IMR-90 (cell line): ENCODE measurements at regions of chr5 and their contacts with region 1.

Region 1: DNA sequence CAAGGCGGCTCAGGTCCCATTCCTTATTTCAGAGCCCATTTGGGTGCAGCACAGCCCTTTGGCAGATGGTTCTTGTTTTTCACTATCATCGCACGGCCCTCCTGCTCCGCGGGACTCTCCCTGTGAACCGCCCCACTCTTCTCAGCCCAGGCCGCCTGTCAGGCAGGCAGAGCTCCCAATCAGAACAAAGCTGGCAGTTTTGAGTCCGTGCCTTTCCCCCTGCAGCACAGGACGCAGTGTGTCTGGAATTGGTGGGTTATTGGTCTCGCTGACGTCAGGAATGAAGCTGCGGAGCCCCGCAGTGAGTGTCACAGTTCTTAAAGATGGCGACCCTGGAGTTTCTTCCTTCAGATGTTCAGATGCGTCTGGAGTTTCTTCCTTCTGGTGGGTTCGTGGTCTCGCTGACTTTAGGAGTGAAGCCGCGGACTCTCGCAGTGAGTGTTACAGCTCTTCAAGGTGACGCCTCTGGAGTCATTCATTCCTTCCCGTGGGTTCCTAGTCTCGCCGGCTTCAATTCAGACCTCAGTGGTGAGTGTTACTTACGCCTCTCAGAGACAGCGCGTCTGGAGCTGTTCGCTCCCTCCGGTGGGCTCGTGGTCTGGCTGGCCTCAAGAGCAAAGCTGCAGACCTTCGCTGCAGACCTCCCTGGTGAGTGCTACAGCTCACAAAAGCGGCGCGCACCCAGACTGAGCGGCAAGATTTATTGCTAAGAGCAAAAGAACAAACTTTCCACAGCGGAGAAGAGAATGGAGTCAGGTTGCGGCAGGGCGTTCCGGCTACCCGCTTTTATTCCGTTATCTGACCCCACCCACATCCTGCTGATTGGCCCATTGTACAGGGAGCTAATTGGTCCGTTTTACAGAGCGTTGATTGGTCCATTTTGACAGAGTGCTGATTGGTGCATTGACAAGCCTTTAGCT is 7.5 kb downstream of the ZDHHC11B start:
- DNase-seq: no peak
- ATAC-seq: 0 out of 2 replicates have a peak, but pooled peaks have one; percentile 40
- H3K4me3 ChIP-seq: no peak overlapping the region
- H3K27ac ChIP-seq: no peak overlapping the region
- H3K4me1 ChIP-seq: no peaks in the 10 kb centered on the region
- H3K27me3 ChIP-seq: peaks cover 19% of the 10 kb centered on the region; the same call in 1 of the 2 replicates
- CTCF ChIP-seq: no peak
- POLR2A ChIP-seq: no peak
- RAD21 ChIP-seq: no peak

Region 2: GRCh38 chr5:683551-684481 is 93.2 kb before region 1 on chr5:
- CTCF ChIA-PET with region 1: no interaction called
- POLR2A ChIA-PET with region 1: no interaction called
- dilution Hi-C with region 1: no loop called
- in situ Hi-C with region 1: loop called (anchors 10 kb)
- intact Hi-C with region 1: loop called (anchors 2 kb)
- DNase-seq: no peak
- ATAC-seq: no peak
- H3K4me3 ChIP-seq: no peak overlapping the region
- H3K27ac ChIP-seq: no peak overlapping the region
- H3K4me1 ChIP-seq: no peaks in the 10 kb centered on the region
- H3K27me3 ChIP-seq: peaks cover 6% of the 10 kb centered on the region; the same call in 1 of the 2 replicates
- CTCF ChIP-seq: no peak
- POLR2A ChIP-seq: no peak
- RAD21 ChIP-seq: no peak

Region 3: DNA sequence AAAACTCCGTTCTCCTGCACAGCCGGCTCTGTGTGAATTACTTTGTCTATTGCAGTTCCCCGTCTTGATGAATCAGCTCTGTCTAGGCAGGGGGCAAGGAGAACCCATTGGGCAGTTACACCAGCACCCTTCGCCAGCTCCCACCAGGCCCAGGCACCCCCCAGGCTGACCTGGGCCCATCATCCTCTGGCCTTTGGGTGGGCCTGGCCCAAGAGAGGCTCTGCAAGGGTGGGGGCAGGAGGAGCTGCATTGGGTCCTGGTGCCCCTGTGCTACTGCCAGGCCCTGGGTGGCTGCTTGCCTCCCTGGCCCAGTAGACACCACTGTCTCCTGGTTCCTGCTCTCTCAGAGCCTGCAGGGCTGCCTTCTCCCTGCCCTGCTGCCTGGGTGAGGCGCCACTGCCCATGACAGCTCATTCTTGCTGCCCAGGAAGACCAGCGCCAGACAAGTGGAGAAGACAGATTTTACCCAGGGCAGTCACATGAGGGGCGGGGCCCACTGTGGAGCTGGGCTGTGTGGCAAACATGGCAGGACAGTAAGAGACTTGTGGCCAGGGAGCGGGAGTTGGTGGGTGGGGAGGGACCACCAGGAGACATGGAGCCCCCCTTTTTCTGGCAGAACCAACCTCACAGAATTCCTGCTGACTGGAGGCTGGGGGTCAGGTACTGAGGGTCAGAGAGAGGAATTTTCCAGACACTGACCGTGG is 955.3 kb after region 1 on chr5:
- CTCF ChIA-PET with region 1: no interaction called
- POLR2A ChIA-PET with region 1: no interaction called
- dilution Hi-C with region 1: no loop called
- in situ Hi-C with region 1: no loop called
- intact Hi-C with region 1: no loop called
- DNase-seq: no peak
- ATAC-seq: no peak
- H3K4me3 ChIP-seq: no peak overlapping the region
- H3K27ac ChIP-seq: no peak overlapping the region
- H3K4me1 ChIP-seq: no peaks in the 10 kb centered on the region
- H3K27me3 ChIP-seq: no peaks in the 10 kb centered on the region; the same call in 1 of the 2 replicates
- CTCF ChIP-seq: no peak
- POLR2A ChIP-seq: no peak
- RAD21 ChIP-seq: no peak

Region 4: GRCh38 chr5:1867114-1867814 is 1090.2 kb after region 1 on chr5:
- CTCF ChIA-PET with region 1: no interaction called
- POLR2A ChIA-PET with region 1: no interaction called
- dilution Hi-C with region 1: no loop called
- in situ Hi-C with region 1: no loop called
- intact Hi-C with region 1: no loop called
- DNase-seq: no peak
- ATAC-seq: no peak
- H3K4me3 ChIP-seq: no peak overlapping the region
- H3K27ac ChIP-seq: no peak overlapping the region
- H3K4me1 ChIP-seq: no peaks in the 10 kb centered on the region
- H3K27me3 ChIP-seq: peaks cover 36% of the 10 kb centered on the region
- CTCF ChIP-seq: no peak
- POLR2A ChIP-seq: no peak
- RAD21 ChIP-seq: no peak